Lower leg skin (tissue), 4 donors: ENCODE measurements at regions of chr1 and their contacts with region 1.

Region 1: DNA sequence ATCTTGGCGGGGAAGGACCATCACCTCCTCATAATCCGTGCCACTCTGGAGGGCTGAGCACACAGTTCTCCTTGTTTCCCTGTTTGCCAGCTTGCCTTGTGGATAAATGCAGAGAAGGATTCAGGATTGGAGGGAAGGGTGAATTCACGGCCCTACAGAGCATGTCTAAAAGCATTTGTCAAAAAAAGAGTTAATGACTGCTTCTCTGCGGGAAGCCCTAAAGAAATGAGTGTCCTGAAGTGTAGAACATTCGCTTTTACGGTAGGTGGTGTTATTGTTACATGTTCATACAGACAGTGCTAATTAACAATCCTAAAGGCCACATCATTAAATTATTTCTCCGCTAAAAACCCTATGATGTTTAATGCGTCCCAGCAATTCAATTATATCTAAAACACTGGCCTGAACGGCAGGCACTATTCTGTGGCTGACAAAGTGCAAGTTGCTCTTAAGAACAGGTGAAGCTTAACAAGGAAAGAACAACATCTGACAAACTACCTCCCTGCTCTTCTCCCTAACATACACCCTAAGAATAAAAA is 112.3 kb upstream of the NFIA start:
- DNase-seq: no peak
- H3K4me3 ChIP-seq: no peak overlapping the region
- CTCF ChIP-seq: no peak
- POLR2A ChIP-seq: no peak

Region 2: DNA sequence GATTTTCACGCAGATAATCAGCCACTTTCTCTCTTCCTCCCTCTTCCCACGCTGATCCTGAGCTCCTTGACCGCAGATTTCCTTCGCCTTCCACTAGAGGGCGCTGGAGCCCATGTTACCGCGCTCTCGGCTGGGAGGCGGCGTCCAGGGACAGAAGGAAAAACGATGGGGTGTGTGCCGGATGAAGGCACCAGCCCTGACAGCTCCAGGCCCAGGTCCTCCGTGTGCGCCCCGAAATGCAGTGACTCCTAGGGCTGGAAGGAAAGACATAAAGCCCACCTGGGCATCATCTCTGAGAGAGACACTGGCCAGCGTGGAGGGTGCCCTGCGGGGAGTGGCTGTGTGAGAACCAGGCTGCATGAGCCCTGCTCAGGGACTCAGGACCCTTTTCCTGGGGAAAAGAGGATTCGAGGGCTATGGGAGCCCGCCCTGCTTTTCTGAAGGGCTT is 998.6 kb before region 1 on chr1:
- intact Hi-C with region 1: loop called (anchors 10 kb)
- DNase-seq: peak; percentile 49 to 93
- H3K4me3 ChIP-seq: no peak overlapping the region
- CTCF ChIP-seq: peak in 1 of 3 donors; percentile 52
- POLR2A ChIP-seq: no peak

Region 3: DNA sequence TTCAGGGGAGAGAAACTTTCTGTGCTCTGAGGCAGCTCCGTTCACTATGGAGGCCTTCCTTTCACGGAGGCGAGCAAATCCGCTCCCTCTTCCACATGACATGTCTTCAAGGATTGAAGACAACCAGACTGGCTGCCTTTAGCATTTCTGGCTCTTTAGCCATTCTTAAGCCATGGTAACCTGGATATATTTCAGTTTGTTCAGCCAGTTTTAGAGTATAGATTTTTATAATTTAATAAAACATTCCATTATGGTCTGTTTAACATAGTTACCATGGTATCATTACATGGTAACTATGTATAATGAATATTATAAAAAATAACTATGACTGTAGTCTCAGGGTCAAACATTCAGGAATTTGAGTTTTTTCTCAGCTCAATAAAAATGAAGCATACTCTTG is 58.1 kb after region 1 on chr1:
- intact Hi-C with region 1: loop called (anchors 5 kb)
- DNase-seq: no peak
- H3K4me3 ChIP-seq: no peak overlapping the region
- CTCF ChIP-seq: no peak
- POLR2A ChIP-seq: no peak

Region 4: GRCh38 chr1:61043010-61043820 is 73.2 kb after region 1 on chr1:
- intact Hi-C with region 1: loop called (anchors 5 kb)
- DNase-seq: peak; percentile 79 to 98
- H3K4me3 ChIP-seq: peak overlapping the region; percentile 24
- CTCF ChIP-seq: peak in 1 of 3 donors; percentile 88
- POLR2A ChIP-seq: no peak

Region 5: DNA sequence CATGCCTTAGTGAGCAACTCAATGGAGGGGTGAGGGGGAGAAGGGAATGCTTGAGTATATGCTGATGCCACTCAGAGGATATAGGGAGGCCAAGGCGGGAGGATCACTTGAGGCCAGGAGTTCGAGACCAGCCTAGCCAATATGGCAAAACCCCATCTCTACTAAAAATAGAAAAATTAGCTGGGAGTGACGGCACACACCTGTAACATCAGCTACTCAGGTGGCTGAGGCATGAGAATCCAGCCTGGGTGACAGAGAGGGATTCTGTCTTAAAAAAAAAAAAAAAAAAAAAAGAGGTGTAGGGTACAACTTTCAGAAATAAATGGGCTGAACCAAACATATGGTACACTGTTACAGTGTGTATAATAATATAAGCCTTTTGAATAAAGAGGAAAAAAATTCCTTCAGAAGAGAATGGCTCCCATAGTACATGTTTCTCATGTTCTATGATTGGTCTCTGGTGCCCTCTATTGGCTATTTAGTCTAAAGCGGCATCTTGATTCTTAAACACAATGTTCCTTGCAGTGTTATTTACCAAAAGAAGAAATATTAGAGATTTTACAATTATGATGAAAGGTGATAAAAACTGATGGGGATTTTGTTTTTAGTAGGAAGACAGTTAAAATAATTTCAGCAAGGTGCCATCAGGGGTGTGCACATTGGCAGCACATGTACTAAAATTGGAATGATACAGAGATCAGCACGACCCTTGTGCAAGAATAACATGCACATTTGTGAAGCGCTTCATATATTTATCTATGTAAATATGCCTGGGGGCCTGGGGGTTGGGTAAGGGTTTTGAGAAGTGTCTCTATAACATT is 882.0 kb after region 1 on chr1:
- intact Hi-C with region 1: loop called (anchors 5 kb)
- DNase-seq: no peak
- H3K4me3 ChIP-seq: no peak overlapping the region
- CTCF ChIP-seq: no peak
- POLR2A ChIP-seq: no peak